ENCODE measurements at regions of chr6 and their contacts with region 1.

Region 1: DNA sequence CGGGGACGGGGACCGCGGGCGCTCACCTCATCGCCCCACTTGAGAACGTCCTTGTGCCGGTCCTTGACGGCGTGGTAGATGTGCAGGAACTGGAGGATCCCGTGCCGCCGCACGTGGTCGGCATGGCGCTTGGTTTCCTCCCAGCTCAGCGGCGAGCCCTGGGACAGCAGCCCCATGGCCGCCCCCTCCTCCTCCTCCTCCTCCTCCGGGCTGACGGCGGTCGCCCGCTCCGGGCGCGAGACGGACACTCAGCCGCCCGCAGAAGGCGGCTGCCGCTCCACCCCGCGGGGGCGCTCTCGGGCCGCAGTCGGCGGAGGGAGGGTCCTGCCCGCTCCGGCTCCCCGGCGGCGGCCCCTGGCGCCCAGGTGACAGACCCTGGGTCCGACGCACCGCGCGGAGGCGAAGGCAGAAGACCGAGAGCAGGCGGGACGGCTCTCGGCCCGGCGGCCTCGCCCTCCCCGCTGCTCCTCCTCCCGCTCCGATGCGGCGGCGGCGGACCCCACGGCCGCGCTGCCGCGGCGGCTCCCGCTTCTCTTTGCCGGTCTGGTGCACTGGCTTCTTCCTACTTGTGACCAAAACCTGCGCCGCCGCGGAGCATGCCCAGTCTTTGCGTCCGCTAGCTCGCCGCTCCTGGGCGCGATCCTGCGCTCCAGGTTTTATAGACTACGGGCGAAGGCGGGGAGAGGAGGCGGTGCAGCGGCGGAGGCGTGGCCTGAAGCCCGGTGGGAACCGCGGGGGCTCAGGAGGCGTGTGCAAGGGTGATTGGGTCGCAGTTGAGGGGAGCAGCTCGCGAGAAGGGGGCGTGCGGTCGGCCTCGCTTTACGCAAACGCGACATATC is at the start of gene GCLC:
- DNase-seq: peak; percentile 94
- ATAC-seq: peak; percentile 68
- H3K4me3 Mint-ChIP-seq: peak within 1 kb of the TSS; percentile 96
- H3K27ac Mint-ChIP-seq: peak within 1 kb of the TSS; percentile 94
- H3K4me1 Mint-ChIP-seq: peaks cover 58% of the 10 kb centered on the region
- H3K27me3 Mint-ChIP-seq: peaks cover 6% of the 10 kb centered on the region
- total RNA-seq, gene GCLC: 18.2 to 23.5 TPM

Region 2: GRCh38 chr6:52995913-52996645 is 548.6 kb before region 1 on chr6:
- CTCF ChIA-PET with region 1: no interaction called
- POLR2A ChIA-PET with region 1: no interaction called
- intact Hi-C with region 1: loop called (anchors 2 to 10 kb)
- DNase-seq: peak; percentile 68
- ATAC-seq: no peak
- H3K4me3 Mint-ChIP-seq: peak overlapping the region; percentile 83
- H3K27ac Mint-ChIP-seq: peak overlapping the region; percentile 77
- H3K4me1 Mint-ChIP-seq: peaks cover 32% of the 10 kb centered on the region
- H3K27me3 Mint-ChIP-seq: peaks cover 4% of the 10 kb centered on the region

Region 3: DNA sequence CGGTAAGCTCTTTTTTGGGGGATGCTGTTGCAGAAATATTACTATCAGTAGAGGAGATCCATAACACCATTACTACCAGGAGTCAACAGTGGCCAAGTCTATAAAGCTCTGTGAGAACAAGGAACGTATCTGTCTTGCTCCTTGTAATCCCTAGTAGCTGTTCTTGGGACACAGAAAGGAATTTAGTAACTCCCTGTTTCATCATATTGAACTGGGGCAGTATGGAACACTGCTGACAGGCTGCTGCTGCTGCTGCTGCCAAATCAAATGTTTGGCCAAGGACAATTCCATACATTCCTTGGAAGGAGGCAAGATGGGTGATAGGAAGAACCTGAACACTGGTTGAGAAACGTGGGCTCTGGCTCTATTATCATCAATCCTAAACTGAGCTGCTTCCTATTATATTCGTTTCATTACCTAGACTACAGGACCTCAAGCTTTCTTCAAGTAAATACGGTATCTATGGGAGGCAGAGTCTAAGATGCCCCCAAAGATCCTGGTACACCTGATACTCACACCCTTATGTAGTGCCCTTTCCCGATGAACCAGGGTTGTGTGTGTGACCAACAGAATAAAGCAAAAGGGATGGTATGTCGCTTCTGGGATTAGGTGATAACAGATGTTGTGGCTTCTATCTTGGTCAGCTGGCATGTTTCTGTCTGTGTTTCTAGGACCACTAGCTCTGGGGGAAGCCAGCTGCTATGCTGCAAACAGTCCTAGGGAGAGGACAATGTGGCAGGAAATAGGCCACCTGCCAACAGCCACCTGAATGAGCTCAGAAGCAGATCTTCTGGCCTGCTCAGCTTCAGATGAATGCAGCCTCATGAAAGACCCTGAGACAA is 235.4 kb before region 1 on chr6:
- CTCF ChIA-PET with region 1: no interaction called
- POLR2A ChIA-PET with region 1: no interaction called
- intact Hi-C with region 1: loop called in 1 of 2 experiments (anchors 5 kb)
- DNase-seq: no peak
- ATAC-seq: no peak
- H3K4me3 Mint-ChIP-seq: no peak overlapping the region
- H3K27ac Mint-ChIP-seq: peak overlapping the region; percentile 59
- H3K4me1 Mint-ChIP-seq: peaks cover 81% of the 10 kb centered on the region
- H3K27me3 Mint-ChIP-seq: no peaks in the 10 kb centered on the region

Region 4: GRCh38 chr6:53359072-53359842 is 185.4 kb before region 1 on chr6:
- CTCF ChIA-PET with region 1: interaction called, 3 read pairs
- POLR2A ChIA-PET with region 1: no interaction called
- intact Hi-C with region 1: loop called in 1 of 2 experiments (anchors 10 kb)
- DNase-seq: peak; percentile 95
- ATAC-seq: peak; percentile 96
- H3K4me3 Mint-ChIP-seq: peak overlapping the region; percentile 87
- H3K27ac Mint-ChIP-seq: peak overlapping the region; percentile 98
- H3K4me1 Mint-ChIP-seq: peaks cover 45% of the 10 kb centered on the region
- H3K27me3 Mint-ChIP-seq: no peaks in the 10 kb centered on the region

Region 5: GRCh38 chr6:53492860-53493634 is 51.6 kb before region 1 on chr6:
- CTCF ChIA-PET with region 1: interaction called, 9 read pairs
- POLR2A ChIA-PET with region 1: interaction called, 3 read pairs
- intact Hi-C with region 1: loop called (anchors 1 kb)
- DNase-seq: peak; percentile 72
- ATAC-seq: peak; percentile 96
- H3K4me3 Mint-ChIP-seq: no peak overlapping the region
- H3K27ac Mint-ChIP-seq: no peak overlapping the region
- H3K4me1 Mint-ChIP-seq: peaks cover 24% of the 10 kb centered on the region
- H3K27me3 Mint-ChIP-seq: peaks cover 16% of the 10 kb centered on the region

Region 6: DNA sequence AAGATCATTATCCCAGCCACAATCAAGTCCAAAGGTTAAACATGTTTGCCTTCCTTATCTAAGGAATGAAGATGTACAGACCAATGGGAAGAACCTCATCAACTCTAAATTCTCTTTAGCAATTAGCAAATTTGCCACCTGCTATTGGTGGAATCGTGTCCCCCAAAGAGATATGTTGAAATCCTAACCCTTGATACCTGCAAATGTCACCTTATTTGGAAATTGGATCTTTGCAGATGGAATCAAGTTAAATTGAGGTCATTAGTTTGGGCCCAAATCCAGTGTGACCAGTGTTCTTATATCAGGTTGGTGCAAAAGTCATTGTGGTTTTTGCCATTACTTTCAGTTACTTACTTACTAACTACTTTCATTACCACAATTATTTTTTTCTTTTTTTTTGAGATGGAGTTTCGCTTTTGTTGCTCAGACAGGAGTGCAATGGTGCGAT is 89.5 kb after region 1 on chr6:
- CTCF ChIA-PET with region 1: no interaction called
- POLR2A ChIA-PET with region 1: no interaction called
- intact Hi-C with region 1: no loop called
- DNase-seq: no peak
- ATAC-seq: no peak
- H3K4me3 Mint-ChIP-seq: no peak overlapping the region
- H3K27ac Mint-ChIP-seq: no peak overlapping the region
- H3K4me1 Mint-ChIP-seq: no peaks in the 10 kb centered on the region
- H3K27me3 Mint-ChIP-seq: peaks cover 8% of the 10 kb centered on the region

Region 7: DNA sequence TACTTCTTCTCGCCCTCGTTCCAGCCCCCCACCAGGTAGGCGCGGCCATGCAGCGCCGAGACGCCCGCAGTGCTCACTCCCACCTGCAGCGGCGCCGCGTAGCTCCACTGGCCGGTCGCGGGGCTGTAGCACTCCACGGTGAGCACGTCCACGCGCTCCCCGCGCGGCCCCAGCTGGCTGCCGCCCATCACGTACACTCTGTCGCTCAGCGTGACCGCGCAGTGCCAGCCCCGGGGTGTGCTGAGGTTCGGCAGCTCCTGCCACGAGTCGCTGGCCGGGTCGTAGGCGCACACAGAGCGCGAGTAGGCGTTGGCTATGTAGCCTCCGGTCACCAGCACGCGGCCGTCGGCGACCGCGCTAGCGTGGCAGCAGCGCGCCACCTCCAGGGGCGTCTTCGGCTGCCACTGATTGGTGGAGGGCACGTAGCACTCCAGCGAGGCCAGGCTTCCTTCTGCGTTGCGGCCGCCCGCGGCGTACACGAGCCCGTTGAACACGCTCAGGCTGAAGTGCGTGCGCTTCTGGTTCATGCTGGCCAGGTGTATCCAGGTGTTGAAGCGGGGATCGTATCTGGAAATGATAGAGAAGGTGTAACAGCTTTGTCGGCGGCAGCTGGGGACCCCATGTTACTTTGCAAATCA is 107.2 kb after region 1 on chr6:
- CTCF ChIA-PET with region 1: interaction called, 7 read pairs
- POLR2A ChIA-PET with region 1: no interaction called
- intact Hi-C with region 1: loop called (anchors 1 kb)
- DNase-seq: peak; percentile 87
- ATAC-seq: peak; percentile 95
- H3K4me3 Mint-ChIP-seq: peak overlapping the region; percentile 81
- H3K27ac Mint-ChIP-seq: peak overlapping the region; percentile 82
- H3K4me1 Mint-ChIP-seq: peaks cover 28% of the 10 kb centered on the region
- H3K27me3 Mint-ChIP-seq: no peaks in the 10 kb centered on the region

Region 8: GRCh38 chr6:53794720-53795253 is 250.1 kb after region 1 on chr6 and contains the start of gene LRRC1:
- CTCF ChIA-PET with region 1: no interaction called
- POLR2A ChIA-PET with region 1: no interaction called
- intact Hi-C with region 1: loop called (anchors 1 to 2 kb)
- DNase-seq: peak; percentile 90
- ATAC-seq: peak; percentile 75
- H3K4me3 Mint-ChIP-seq: peak within 1 kb of the TSS; percentile 90
- H3K27ac Mint-ChIP-seq: peak within 1 kb of the TSS; percentile 83
- H3K4me1 Mint-ChIP-seq: peaks cover 17% of the 10 kb centered on the region
- H3K27me3 Mint-ChIP-seq: peaks cover 22% of the 10 kb centered on the region
- total RNA-seq, gene LRRC1: 2.3 to 3.1 TPM